Activated CD8-positive, alpha-beta T cell treated with anti-CD3 and anti-CD28 coated beads for 36 hours (primary cell): ENCODE measurements at regions of chr2 and their contacts with region 1.

Region 1: DNA sequence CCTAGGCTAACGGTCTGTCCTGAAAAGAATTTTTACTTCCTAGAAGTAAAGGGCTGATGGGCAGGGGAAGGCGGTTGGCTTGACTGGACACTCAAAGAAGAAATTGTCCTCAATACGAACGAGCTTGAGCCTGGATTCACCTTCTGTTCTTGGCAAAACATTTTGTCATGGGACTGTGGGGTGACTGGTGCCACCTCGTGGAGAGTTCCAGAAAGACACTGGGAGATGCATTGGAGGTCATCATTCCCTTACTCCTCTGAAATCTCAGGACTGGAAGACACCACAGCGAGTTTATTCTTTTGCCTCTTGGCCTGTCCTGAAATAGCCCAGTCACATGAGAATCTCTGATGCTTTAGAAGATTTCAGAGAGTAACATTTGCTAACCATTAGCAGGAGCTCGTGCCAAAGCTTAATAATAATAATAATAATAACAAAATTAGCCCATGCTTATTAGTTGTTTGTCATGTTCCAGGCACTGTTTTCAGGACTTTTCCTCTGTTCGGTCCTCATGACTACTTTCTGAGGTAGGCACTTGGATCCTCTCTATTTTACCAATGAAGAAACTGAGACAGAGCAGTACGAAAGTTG is 44.5 kb downstream of the TMEM182 start:
- DNase-seq: peak; percentile 59
- ATAC-seq: peak; percentile 64
- H3K4me3 Mint-ChIP-seq: no peak overlapping the region
- H3K27ac Mint-ChIP-seq: no peak overlapping the region
- H3K4me1 Mint-ChIP-seq: peaks cover 11% of the 10 kb centered on the region
- H3K27me3 Mint-ChIP-seq: no peaks in the 10 kb centered on the region
- CTCF ChIP-seq: peak; percentile 78

Region 2: GRCh38 chr2:102520028-102520427 is 286.3 kb before region 1 on chr2:
- CTCF ChIA-PET with region 1: interaction called, 3 read pairs
- POLR2A ChIA-PET with region 1: no interaction called
- intact Hi-C with region 1: loop called (anchors 10 kb)
- DNase-seq: peak; percentile 43
- ATAC-seq: peak; percentile 65
- H3K4me3 Mint-ChIP-seq: no peak overlapping the region
- H3K27ac Mint-ChIP-seq: no peak overlapping the region
- H3K4me1 Mint-ChIP-seq: no peaks in the 10 kb centered on the region
- H3K27me3 Mint-ChIP-seq: no peaks in the 10 kb centered on the region
- CTCF ChIP-seq: peak; percentile 74

Region 3: GRCh38 chr2:102736410-102737409 is 69.6 kb before region 1 on chr2:
- CTCF ChIA-PET with region 1: interaction called, 25 read pairs
- POLR2A ChIA-PET with region 1: no interaction called
- intact Hi-C with region 1: no loop called
- DNase-seq: peak; percentile 89
- ATAC-seq: peak; percentile 95
- H3K4me3 Mint-ChIP-seq: peak overlapping the region; percentile 95
- H3K27ac Mint-ChIP-seq: peak overlapping the region; percentile 92
- H3K4me1 Mint-ChIP-seq: peaks cover 39% of the 10 kb centered on the region
- H3K27me3 Mint-ChIP-seq: no peaks in the 10 kb centered on the region
- CTCF ChIP-seq: no peak

Region 4: GRCh38 chr2:102753563-102754159 is 52.7 kb before region 1 on chr2:
- CTCF ChIA-PET with region 1: interaction called, 79 read pairs
- POLR2A ChIA-PET with region 1: no interaction called
- intact Hi-C with region 1: loop called (anchors 5 kb)
- DNase-seq: peak; percentile 42
- ATAC-seq: peak; percentile 51
- H3K4me3 Mint-ChIP-seq: no peak overlapping the region
- H3K27ac Mint-ChIP-seq: no peak overlapping the region
- H3K4me1 Mint-ChIP-seq: no peaks in the 10 kb centered on the region
- H3K27me3 Mint-ChIP-seq: no peaks in the 10 kb centered on the region
- CTCF ChIP-seq: peak; percentile 92

Region 5: DNA sequence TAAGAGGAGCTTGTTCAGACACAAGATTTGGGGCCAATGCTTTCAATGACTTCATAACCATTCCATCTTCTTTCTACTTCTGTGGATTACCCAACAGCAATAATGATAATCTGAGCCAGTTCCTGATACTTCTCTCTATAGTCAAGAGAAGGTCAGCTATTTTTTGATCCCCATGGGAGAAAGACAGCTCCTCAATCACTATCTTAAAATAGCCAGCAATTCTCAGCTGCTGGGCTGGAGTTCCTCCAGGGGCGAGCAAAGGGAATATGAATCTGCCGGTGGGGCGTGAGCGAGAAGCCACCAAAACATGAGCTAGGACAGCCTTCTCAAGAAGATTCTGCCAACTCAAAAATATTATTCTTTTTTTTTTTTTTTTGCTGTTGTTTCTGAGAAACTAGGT is 44.6 kb before region 1 on chr2 and contains the start of gene TMEM182:
- CTCF ChIA-PET with region 1: interaction called, 21 read pairs
- POLR2A ChIA-PET with region 1: no interaction called
- intact Hi-C with region 1: no loop called
- DNase-seq: no peak
- ATAC-seq: no peak
- H3K4me3 Mint-ChIP-seq: no peak within 1 kb of the TSS
- H3K27ac Mint-ChIP-seq: no peak within 1 kb of the TSS
- H3K4me1 Mint-ChIP-seq: no peaks in the 10 kb centered on the region
- H3K27me3 Mint-ChIP-seq: no peaks in the 10 kb centered on the region
- CTCF ChIP-seq: no peak
- total RNA-seq, gene TMEM182: 4.4 to 5.3 TPM

Region 6: GRCh38 chr2:102796337-102796736 is 10.0 kb before region 1 on chr2:
- CTCF ChIA-PET with region 1: interaction called, 10 read pairs
- POLR2A ChIA-PET with region 1: no interaction called
- intact Hi-C with region 1: no loop called
- DNase-seq: no peak
- ATAC-seq: no peak
- H3K4me3 Mint-ChIP-seq: no peak overlapping the region
- H3K27ac Mint-ChIP-seq: no peak overlapping the region
- H3K4me1 Mint-ChIP-seq: peaks cover 2% of the 10 kb centered on the region
- H3K27me3 Mint-ChIP-seq: no peaks in the 10 kb centered on the region
- CTCF ChIP-seq: no peak